ENCODE measurements at regions of chr10 and their contacts with region 1.

Region 1: GRCh38 chr10:97037365-97038361 is 148.1 kb downstream of the SLIT1 start:
- DNase-seq: peak; percentile 83
- CTCF ChIP-seq: peak; percentile 89

Region 2: GRCh38 chr10:96991313-96991841 is 46.3 kb before region 1 on chr10:
- CTCF ChIA-PET with region 1: interaction called, 10 read pairs
- POLR2A ChIA-PET with region 1: no interaction called
- DNase-seq: no peak
- CTCF ChIP-seq: no peak

Region 3: DNA sequence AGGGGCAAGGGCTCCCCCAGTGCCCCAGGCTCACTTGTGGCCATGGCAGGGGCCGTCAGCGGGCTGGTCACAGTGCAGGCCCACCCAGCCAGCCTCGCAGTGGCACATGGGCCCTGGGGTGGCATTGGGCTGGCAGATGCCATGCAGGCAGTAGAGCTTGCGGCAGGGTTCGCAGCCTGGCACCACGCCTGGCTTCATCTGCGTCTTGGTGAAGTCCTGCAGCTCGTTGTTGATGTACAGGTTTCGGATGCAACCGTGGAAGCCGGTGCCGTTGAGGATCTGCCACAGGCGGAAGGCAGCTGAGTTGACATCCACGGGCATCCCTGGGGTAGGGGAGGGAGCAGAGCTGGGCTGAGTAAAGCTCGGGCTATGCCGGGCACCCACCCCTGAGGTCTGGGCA is 35.0 kb before region 1 on chr10:
- CTCF ChIA-PET with region 1: no interaction called
- POLR2A ChIA-PET with region 1: no interaction called
- DNase-seq: no peak
- CTCF ChIP-seq: no peak

Region 4: DNA sequence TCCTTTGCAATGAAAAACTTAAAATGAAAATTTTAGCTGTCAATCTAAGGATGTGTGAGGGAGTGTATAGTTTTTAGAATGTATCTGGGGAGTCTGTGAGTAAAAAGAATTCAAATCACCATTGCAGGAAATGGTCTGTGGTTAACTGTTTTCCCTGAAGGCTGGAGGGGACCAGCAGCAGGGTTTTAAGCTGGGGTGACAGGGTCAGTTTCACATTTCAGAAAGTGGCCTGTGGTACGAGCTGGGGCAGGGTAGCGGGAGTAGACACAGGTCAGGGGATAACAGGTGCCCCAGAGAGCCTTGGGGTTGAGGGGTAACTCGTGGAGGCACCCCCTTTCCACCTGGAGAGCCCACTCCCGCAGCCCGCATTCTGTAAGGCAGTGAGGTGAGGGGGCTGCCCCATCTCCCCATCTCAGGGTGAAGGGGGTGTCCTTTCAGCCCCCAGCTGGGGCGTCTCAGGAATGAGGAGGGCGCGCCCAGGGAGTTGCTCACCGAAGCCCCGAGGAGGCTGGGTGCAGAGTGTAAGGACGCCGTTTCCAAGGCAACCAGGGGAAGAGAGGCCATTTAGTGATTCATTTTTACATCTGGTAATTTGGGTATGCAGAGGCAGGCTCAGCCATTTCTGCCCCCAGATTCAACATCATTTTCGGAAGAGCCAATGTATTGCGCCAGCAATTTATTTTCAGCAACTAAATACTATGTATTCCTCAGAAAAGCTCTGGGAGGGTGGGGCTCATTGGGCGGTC is 20.8 kb before region 1 on chr10:
- CTCF ChIA-PET with region 1: interaction called, 16 read pairs
- POLR2A ChIA-PET with region 1: no interaction called
- DNase-seq: peak; percentile 77
- CTCF ChIP-seq: no peak

Region 5: GRCh38 chr10:97048649-97049427 is 11.2 kb after region 1 on chr10:
- CTCF ChIA-PET with region 1: interaction called, 57 read pairs
- POLR2A ChIA-PET with region 1: no interaction called
- DNase-seq: no peak
- CTCF ChIP-seq: no peak

Region 6: DNA sequence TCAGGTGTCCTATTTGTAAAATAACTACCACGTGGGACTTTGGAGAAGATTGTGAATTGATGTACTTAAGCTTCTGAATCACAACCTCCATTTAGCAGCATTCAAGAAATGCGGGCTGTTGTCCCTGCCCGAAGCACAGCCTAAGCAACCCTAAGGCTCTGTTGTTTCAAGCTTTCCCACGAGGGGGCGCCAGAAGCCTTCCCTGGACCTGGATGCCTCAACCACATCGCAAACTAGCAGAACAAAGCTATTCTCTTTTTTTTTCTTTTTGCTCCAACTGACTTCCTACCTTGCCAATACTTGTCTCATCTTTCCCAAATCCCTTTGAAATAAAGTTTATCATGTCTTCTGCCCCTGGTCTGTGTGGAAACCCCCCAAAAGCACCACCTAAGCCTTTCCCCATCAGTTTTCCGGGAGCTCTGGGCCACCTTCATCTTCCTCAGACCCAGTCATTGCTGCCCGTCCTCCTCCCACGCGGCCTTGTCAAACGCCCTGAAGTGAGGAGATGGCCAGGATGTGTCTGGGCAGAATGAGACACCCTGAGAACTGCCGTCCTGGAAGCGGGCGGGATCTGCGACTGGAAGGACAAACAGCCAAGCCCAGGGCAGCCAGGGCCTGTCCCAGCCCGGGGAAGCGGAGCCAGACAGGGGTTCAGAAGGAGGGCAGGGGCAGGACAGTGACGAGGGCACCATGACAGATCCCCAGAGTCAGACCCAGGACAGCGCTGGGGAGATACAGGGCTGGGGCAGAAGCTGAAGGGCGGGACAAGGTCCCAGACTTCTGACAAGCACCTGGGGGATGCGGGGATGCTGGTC is 35.4 kb after region 1 on chr10:
- CTCF ChIA-PET with region 1: interaction called, 14 read pairs
- POLR2A ChIA-PET with region 1: no interaction called
- DNase-seq: peak; percentile 84
- CTCF ChIP-seq: peak; percentile 96

Region 7: GRCh38 chr10:97196223-97197029 is 158.8 kb after region 1 on chr10:
- CTCF ChIA-PET with region 1: interaction called, 19 read pairs
- POLR2A ChIA-PET with region 1: no interaction called
- DNase-seq: peak; percentile 79
- CTCF ChIP-seq: peak; percentile 79

Region 8: GRCh38 chr10:97210543-97210961 is 172.9 kb after region 1 on chr10:
- CTCF ChIA-PET with region 1: interaction called, 78 read pairs
- POLR2A ChIA-PET with region 1: no interaction called
- DNase-seq: peak; percentile 70
- CTCF ChIP-seq: peak; percentile 94

Measured in GM10248 (cell line).